ENCODE measurements at regions of chrX and their contacts with region 1.

Region 1: DNA sequence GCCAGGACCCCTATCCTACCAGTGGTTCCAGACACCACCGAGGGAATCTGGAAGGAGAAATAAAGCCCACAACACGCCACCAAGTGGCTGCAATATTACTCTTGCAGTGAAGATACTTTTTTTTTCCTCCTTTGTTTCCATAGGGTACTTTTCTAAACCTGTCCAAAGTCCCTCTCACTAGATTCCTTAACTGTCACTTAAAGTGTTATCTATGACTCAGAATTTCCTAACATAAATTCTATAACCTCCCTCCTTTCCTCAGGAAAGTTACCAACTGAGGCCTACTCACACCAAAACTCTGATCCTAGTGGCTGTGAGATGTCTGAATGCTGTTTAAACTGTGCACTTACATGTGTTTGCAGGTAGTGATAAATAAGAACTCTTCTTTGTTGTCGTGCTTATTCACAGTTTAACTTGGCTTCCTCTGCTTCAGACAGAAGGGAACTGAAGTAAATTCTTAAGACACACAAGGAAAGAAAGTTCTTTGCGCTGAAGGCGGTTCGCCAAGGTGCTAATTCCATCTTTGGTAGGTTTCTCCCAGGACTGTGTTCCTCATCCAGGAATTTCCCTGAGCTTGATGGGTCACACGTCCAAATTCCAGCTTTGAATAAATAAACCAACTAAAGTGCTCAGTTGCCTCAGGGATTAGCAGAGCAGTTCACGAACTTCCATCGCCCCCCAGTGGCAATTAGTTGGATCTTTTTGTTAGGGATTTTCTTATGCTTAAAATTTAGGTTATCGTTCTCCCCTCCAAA is 10.7 kb upstream of the HCCS start:
- DNase-seq: no peak
- H3K4me3 ChIP-seq: no peak overlapping the region
- H3K27ac ChIP-seq: peak overlapping the region; percentile 69 to 75 (median 72)
- H3K4me1 ChIP-seq: peaks cover 0 to 27% (median 14%) of the 10 kb centered on the region in 4 donors
- H3K27me3 ChIP-seq: no peaks in the 10 kb centered on the region
- CTCF ChIP-seq: peak; percentile 46 to 52 (median 50)
- EP300 ChIP-seq: no peak
- POLR2A ChIP-seq: no peak

Region 2: GRCh38 chrX:10615931-10616775 is 484.3 kb before region 1 on chrX:
- intact Hi-C with region 1: loop called (anchors 5 kb)
- DNase-seq: no peak
- H3K4me3 ChIP-seq: no peak overlapping the region
- H3K27ac ChIP-seq: no peak overlapping the region
- H3K4me1 ChIP-seq: peaks cover 0 to 40% (median 25%) of the 10 kb centered on the region in 4 donors
- H3K27me3 ChIP-seq: no peaks in the 10 kb centered on the region
- CTCF ChIP-seq: peak; percentile 65 to 69 (median 69)
- EP300 ChIP-seq: no peak
- POLR2A ChIP-seq: no peak

Region 3: GRCh38 chrX:10722851-10723250 is 377.6 kb before region 1 on chrX:
- intact Hi-C with region 1: loop called (anchors 5 kb)
- DNase-seq: no peak
- H3K4me3 ChIP-seq: no peak overlapping the region
- H3K27ac ChIP-seq: peak overlapping the region in 2 of 4 donors; percentile 35 to 58
- H3K4me1 ChIP-seq: peaks cover 0 to 8% (median 0%) of the 10 kb centered on the region in 4 donors
- H3K27me3 ChIP-seq: no peaks in the 10 kb centered on the region
- CTCF ChIP-seq: peak; percentile 71 to 78 (median 71)
- EP300 ChIP-seq: no peak
- POLR2A ChIP-seq: no peak

Region 4: GRCh38 chrX:11151799-11152559 is 51.5 kb after region 1 on chrX:
- intact Hi-C with region 1: no loop called
- DNase-seq: no peak
- H3K4me3 ChIP-seq: no peak overlapping the region
- H3K27ac ChIP-seq: no peak overlapping the region
- H3K4me1 ChIP-seq: peaks cover 0 to 3% (median 0%) of the 10 kb centered on the region in 4 donors
- H3K27me3 ChIP-seq: no peaks in the 10 kb centered on the region
- CTCF ChIP-seq: no peak
- EP300 ChIP-seq: no peak
- POLR2A ChIP-seq: no peak